ENCODE measurements at regions of chr22 and their contacts with region 1.

Region 1: DNA sequence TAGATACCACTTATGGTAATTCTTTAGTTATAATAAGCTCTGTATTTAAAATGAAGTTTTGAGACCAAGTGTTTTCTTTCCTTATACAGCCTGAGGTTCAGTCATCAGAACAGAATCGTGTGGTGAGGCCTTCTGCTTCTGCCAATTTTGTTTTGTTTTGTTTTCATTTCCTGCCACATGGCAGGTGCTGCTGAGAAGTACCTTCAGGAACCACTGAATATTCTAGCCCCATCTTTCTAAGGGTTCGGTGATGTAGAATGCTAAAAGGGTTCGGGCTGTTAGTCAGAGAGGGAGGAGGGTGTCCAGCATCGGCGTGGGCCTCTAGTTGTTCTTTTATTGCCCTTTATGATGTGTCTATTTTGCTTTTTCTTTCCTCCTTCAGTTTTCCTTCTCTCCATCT is 25.8 kb downstream of the TNRC6B start:
- DNase-seq: peak; percentile 65
- H3K4me3 Mint-ChIP-seq: peak overlapping the region; percentile 56
- H3K27ac Mint-ChIP-seq: peak overlapping the region; percentile 87
- H3K4me1 Mint-ChIP-seq: peaks cover 68% of the 10 kb centered on the region
- H3K27me3 Mint-ChIP-seq: no peaks in the 10 kb centered on the region

Region 2: GRCh38 chr22:40156001-40156516 is 47.5 kb before region 1 on chr22:
- CTCF ChIA-PET with region 1: no interaction called
- intact Hi-C with region 1: no loop called
- DNase-seq: peak; percentile 20
- H3K4me3 Mint-ChIP-seq: no peak overlapping the region
- H3K27ac Mint-ChIP-seq: peak overlapping the region; percentile 5
- H3K4me1 Mint-ChIP-seq: peaks cover 11% of the 10 kb centered on the region
- H3K27me3 Mint-ChIP-seq: no peaks in the 10 kb centered on the region

Region 3: DNA sequence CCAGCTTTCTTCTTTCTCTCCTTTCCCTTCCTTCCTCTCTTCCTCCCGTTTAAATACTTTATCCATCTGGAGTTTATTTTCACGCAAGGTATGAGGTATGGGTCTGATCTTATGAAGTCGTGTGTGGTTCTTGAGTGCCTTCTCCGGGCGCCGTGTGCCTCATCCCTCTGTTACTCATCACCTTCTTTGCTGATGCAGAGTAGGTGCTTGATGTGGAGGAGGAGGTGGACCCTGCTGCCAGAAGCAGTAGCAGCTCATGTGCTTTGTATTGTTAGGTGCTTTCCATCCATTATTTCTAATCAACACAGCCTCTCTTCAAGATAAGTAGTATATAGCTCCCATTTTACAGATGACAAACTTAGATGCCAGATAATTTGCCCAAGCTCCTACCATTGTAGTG is 21.1 kb after region 1 on chr22:
- CTCF ChIA-PET with region 1: interaction called, 5 read pairs
- intact Hi-C with region 1: loop called (anchors 1 kb)
- DNase-seq: peak; percentile 79
- H3K4me3 Mint-ChIP-seq: peak overlapping the region; percentile 61
- H3K27ac Mint-ChIP-seq: peak overlapping the region; percentile 83
- H3K4me1 Mint-ChIP-seq: peaks cover 57% of the 10 kb centered on the region
- H3K27me3 Mint-ChIP-seq: no peaks in the 10 kb centered on the region

Region 4: GRCh38 chr22:40250608-40251007 is 47.0 kb after region 1 on chr22:
- CTCF ChIA-PET with region 1: no interaction called
- intact Hi-C with region 1: loop called (anchors 2 kb)
- DNase-seq: peak; percentile 70
- H3K4me3 Mint-ChIP-seq: no peak overlapping the region
- H3K27ac Mint-ChIP-seq: peak overlapping the region; percentile 16
- H3K4me1 Mint-ChIP-seq: peaks cover 70% of the 10 kb centered on the region
- H3K27me3 Mint-ChIP-seq: no peaks in the 10 kb centered on the region